ENCODE measurements at regions of chr1 and their contacts with region 1.

Region 1: DNA sequence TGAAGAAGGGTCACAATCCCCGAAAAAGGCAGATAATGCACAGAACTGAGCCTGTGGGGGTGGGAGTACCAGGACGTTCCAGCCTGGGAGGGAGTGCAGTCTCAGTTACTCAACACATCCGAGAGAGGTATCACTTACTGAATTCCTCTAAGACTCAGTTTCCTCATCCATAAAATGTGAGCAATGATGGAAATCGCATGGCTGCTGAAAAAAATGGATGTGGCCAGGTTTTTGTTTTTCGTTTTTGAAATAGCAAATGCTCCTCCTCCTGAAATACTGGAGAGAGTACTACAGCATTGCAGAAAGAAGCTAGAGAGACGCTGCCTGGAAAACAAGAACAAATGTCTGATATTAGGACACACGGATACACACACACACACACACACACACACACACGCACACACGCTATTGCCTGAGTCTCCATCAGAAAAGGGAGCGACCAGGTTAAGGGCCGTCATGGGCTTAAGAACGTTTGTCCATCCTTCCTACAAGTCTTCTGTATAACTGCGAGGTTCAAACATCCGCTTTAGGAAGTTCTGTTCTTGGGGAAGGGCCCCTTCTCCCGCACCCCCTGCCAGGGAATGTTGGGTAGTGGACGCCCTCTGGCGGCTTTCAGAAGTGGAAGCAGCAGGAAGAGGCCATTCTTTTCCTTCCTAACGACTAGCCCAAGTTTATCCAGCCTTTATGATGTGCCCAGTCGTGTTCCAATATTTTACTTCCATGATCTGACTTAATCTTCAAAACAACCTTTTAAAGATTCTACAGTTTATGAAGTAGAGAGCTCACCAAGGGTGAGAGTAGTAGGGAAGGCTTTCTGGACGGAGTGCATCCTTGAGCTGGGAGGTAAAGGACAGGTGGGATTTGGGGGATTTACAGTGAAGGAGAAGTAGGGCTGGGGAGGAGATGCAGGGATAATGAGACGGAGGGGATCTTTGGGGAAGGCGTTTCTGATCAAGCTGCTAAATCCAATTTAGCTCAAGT is 699 bp upstream of the NES start:
- H3K4me3 ChIP-seq: no peak overlapping the region
- H3K27ac ChIP-seq: no peak overlapping the region
- H3K4me1 ChIP-seq: no peaks in the 10 kb centered on the region
- CTCF ChIP-seq: peak; percentile 86; the same call in 1 of the 2 replicates

Region 2: GRCh38 chr1:156583821-156584622 is 93.9 kb before region 1 on chr1:
- CTCF ChIA-PET with region 1: interaction called, 11 read pairs
- POLR2A ChIA-PET with region 1: no interaction called
- H3K4me3 ChIP-seq: no peak overlapping the region
- H3K27ac ChIP-seq: no peak overlapping the region
- H3K4me1 ChIP-seq: no peaks in the 10 kb centered on the region
- CTCF ChIP-seq: peak; percentile 69

Region 3: DNA sequence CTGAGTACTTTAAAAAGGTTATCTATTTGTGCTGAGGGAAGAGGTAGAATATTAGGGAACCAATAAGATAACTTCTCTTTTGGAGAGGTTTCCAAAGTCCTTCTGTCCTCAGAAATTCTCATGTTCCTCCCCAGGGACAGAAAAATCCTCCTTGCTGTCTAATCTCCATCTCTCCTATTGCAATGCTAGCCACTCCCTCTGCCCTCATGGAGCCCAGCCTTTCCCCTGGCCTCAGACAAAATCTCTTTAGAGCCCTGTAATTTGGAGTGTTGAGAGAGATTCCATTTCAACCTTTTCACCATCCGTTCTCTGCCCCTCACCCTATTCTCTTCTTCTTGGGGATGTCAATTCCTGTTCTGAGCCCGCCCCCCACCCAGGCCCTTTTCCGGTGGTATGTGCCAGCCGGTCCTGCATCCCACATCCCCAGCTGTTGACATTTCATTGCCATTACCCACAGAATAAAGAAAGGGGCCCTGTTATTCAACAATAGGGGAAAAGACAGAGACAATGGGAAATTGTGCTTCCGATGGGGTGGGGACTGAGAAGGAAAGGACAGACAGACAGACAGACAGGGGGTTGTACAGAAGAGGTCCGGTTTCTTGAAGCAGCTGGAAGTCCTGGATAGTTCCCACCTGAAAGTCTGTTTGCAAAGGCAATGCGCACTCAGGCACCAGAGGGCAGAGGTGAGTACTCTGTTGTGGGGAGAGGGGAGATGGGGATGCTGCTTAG is 58.9 kb before region 1 on chr1 and contains the start of gene HAPLN2:
- CTCF ChIA-PET with region 1: interaction called, 235 read pairs
- POLR2A ChIA-PET with region 1: no interaction called
- H3K4me3 ChIP-seq: no peak within 1 kb of the TSS
- H3K27ac ChIP-seq: no peak within 1 kb of the TSS
- H3K4me1 ChIP-seq: peaks cover 5% of the 10 kb centered on the region
- CTCF ChIP-seq: peak; percentile 54; the same call in 1 of the 2 replicates

Region 4: GRCh38 chr1:156711011-156711817 is 33.3 kb after region 1 on chr1:
- CTCF ChIA-PET with region 1: interaction called, 579 read pairs
- POLR2A ChIA-PET with region 1: no interaction called
- H3K4me3 ChIP-seq: no peak overlapping the region
- H3K27ac ChIP-seq: no peak overlapping the region
- H3K4me1 ChIP-seq: peaks cover 3% of the 10 kb centered on the region; the same call in 1 of the 2 replicates
- CTCF ChIP-seq: no peak

Region 5: DNA sequence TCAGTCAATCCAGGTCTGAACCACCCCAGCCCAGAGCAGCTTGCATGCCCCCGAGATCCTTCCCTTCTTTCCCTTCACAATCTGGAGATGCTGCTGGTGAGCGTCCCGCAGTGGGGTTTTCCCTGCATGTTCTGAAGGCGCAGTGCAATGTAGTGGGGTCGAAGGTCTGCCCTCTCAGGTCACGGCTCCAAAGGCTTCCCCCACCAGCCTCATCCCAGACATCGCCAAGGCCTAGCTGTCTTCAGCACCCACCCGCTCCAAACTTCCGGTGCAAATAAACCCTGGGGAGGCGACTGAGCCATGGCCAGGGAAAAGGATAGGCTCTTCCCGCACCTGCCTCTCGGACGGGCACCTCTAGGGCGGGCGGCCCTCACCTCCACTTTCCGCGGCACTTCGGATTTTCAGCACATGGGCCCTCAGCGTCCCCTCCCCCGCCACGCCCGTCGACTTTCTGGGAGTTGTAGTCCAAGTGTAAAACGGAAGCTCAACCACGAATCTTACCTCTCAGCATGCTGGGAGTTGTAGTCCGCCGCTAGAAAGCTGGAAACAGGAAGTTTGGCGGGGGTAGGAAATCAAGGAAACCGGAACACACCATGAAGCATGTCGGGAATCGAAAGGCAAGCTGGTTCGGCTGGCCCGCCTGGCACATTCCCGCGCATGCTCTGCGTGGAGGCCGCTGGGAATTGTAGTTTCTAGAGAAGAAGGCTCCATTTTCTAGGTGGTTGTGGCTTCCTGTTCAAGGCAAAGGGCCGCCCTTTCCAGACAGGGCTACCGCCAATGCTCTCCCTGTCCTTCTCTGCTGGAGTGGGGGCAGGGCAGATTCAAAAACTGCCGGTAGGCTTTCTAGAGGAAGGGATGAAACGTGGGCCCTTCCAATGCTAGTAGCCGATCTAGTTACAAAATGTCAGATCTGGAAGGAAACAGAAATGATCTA is 63.0 kb after region 1 on chr1 and contains the start of gene MRPL24:
- CTCF ChIA-PET with region 1: no interaction called
- POLR2A ChIA-PET with region 1: no interaction called
- H3K4me3 ChIP-seq: peak within 1 kb of the TSS; percentile 74
- H3K27ac ChIP-seq: peak within 1 kb of the TSS; percentile 59
- H3K4me1 ChIP-seq: no peaks in the 10 kb centered on the region
- CTCF ChIP-seq: 0 out of 2 replicates have a peak, but pooled peaks have one; percentile 11

Measured in HEK293 (cell line).